Endothelial cell of umbilical vein (primary cell): ENCODE measurements at regions of chr15 and their contacts with region 1.

Region 1: GRCh38 chr15:47384341-47384740 is 333.0 kb upstream of the SEMA6D start:
- DNase-seq: peak; percentile 97
- H3K4me3 ChIP-seq: no peak overlapping the region
- H3K27ac ChIP-seq: peak overlapping the region; percentile 83
- H3K4me1 ChIP-seq: peaks cover 21% of the 10 kb centered on the region
- H3K27me3 ChIP-seq: no peaks in the 10 kb centered on the region
- CTCF ChIP-seq: no peak
- POLR2A ChIP-seq: no peak

Region 2: GRCh38 chr15:47397655-47398054 is 13.3 kb after region 1 on chr15:
- CTCF ChIA-PET with region 1: interaction called, 4 read pairs
- POLR2A ChIA-PET with region 1: no interaction called
- dilution Hi-C with region 1: no loop called
- intact Hi-C with region 1: loop called (anchors 1 kb)
- DNase-seq: peak; percentile 41
- H3K4me3 ChIP-seq: no peak overlapping the region
- H3K27ac ChIP-seq: no peak overlapping the region
- H3K4me1 ChIP-seq: peaks cover 13% of the 10 kb centered on the region
- H3K27me3 ChIP-seq: no peaks in the 10 kb centered on the region
- CTCF ChIP-seq: no peak
- POLR2A ChIP-seq: no peak

Region 3: GRCh38 chr15:47415539-47415971 is 31.2 kb after region 1 on chr15:
- CTCF ChIA-PET with region 1: interaction called, 4 read pairs
- POLR2A ChIA-PET with region 1: no interaction called
- dilution Hi-C with region 1: no loop called
- intact Hi-C with region 1: loop called (anchors 2 kb)
- DNase-seq: peak; percentile 91
- H3K4me3 ChIP-seq: no peak overlapping the region
- H3K27ac ChIP-seq: peak overlapping the region; percentile 97
- H3K4me1 ChIP-seq: peaks cover 40% of the 10 kb centered on the region
- H3K27me3 ChIP-seq: no peaks in the 10 kb centered on the region
- CTCF ChIP-seq: no peak
- POLR2A ChIP-seq: no peak

Region 4: GRCh38 chr15:47473832-47474231 is 89.5 kb after region 1 on chr15:
- CTCF ChIA-PET with region 1: interaction called, 12 read pairs
- POLR2A ChIA-PET with region 1: no interaction called
- dilution Hi-C with region 1: no loop called
- intact Hi-C with region 1: no loop called
- DNase-seq: peak; percentile 91
- H3K4me3 ChIP-seq: no peak overlapping the region
- H3K27ac ChIP-seq: no peak overlapping the region
- H3K4me1 ChIP-seq: peaks cover 10% of the 10 kb centered on the region
- H3K27me3 ChIP-seq: no peaks in the 10 kb centered on the region
- CTCF ChIP-seq: no peak
- POLR2A ChIP-seq: no peak

Region 5: DNA sequence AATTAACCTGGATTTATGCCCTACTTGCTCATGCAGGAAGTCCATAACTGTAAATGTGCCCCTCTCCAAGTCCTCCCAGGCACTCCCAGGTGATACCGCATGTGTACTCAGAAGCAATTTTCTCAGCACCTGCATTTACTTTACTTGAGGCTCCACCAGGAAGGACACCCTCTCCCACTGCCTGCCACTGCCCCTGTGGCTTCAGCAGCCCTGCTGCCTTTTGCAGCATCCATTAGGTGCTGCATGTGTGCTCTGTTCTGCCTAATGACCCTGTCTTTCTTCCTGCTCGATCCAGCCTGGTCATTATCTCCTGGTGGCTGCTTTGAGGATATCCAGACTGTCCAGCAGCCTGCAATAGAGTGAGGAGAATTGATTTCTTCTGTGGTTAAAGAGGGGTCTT is 225.4 kb after region 1 on chr15:
- CTCF ChIA-PET with region 1: no interaction called
- POLR2A ChIA-PET with region 1: no interaction called
- dilution Hi-C with region 1: no loop called
- intact Hi-C with region 1: loop called (anchors 5 kb)
- DNase-seq: no peak
- H3K4me3 ChIP-seq: no peak overlapping the region
- H3K27ac ChIP-seq: no peak overlapping the region
- H3K4me1 ChIP-seq: no peaks in the 10 kb centered on the region
- H3K27me3 ChIP-seq: no peaks in the 10 kb centered on the region
- CTCF ChIP-seq: no peak
- POLR2A ChIP-seq: no peak

Region 6: GRCh38 chr15:47862402-47862801 is 478.1 kb after region 1 on chr15:
- CTCF ChIA-PET with region 1: no interaction called
- POLR2A ChIA-PET with region 1: no interaction called
- dilution Hi-C with region 1: no loop called
- intact Hi-C with region 1: no loop called
- DNase-seq: no peak
- H3K4me3 ChIP-seq: no peak overlapping the region
- H3K27ac ChIP-seq: no peak overlapping the region
- H3K4me1 ChIP-seq: no peaks in the 10 kb centered on the region
- H3K27me3 ChIP-seq: peaks cover 6% of the 10 kb centered on the region in 2 experiments
- CTCF ChIP-seq: no peak
- POLR2A ChIP-seq: no peak